HAP-1 (cell line): ENCODE measurements at regions of chr5 and their contacts with region 1.

Region 1: DNA sequence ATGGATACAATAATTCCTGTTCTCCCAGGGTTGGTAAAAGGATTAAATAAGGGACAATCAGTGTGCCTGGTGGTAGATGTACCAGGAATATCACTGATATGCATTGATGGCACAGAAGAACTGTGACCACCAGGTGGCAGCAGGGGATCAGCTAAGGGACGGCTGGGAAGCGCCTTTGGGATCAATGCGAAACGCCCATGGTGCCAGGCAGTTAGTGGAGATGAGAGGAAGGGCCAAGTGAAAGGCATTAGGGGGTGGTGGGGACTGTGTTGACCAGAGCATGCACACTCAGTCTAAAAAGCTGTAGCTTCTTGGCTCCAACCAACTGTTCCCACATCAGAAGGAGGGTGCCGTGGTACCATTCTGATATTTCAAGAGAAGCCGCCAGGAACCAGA is 55.6 kb downstream of the ARHGEF37 start:
- DNase-seq: peak; percentile 63 to 95
- H3K4me3 ChIP-seq: no peak overlapping the region
- H3K4me1 ChIP-seq: no peaks in the 10 kb centered on the region
- H3K27me3 ChIP-seq: no peaks in the 10 kb centered on the region

Region 2: DNA sequence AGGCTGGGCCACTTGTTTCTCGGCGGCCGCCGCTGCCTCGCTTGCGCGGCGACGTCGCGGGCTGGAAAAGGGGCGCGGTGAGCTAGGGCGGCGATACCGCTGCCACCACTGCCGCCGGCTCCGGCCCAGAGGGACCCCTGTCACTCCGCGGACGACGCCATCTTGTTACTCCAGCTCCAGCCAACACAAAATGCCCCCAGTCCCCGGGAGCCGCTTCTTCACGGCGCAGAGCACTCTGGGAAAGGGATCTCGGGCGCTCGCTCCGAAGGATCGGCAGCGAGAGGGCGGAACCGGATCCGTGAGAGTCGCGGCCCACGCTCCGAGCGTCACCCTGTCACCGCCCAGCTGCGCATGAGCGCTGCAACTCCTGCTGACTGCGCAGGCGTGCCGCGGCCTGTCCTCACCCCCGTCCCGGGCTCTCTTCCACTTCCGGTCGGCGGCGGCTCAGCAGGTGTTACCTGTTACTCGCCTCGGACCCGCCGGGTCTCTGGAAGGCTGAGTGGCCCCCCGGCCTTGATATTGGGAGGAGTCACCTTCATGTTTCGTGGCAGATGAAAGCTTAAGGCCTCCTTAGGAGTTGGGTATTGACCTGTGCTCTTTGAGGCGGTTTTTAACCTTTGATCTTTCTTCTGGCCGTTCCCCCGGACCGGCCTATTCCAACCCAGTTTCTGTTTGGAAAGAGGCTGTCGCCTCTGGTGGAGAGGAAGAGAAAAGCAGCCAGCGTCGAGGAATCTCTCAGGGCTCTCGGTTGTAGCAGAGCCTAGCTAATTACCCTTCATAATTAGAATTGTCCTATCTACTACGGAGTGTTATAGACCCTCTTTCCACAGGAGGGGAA is 85.4 kb before region 1 on chr5 and contains the start of gene CSNK1A1:
- in situ Hi-C with region 1: no loop called
- DNase-seq: peak; percentile 97 to 99
- H3K4me3 ChIP-seq: peak within 1 kb of the TSS; percentile 89
- H3K4me1 ChIP-seq: peaks cover 26% of the 10 kb centered on the region
- H3K27me3 ChIP-seq: no peaks in the 10 kb centered on the region

Region 3: GRCh38 chr5:149828161-149828884 is 191.5 kb after region 1 on chr5:
- in situ Hi-C with region 1: loop called (anchors 5 kb)
- DNase-seq: peak; percentile 80 to 91
- H3K4me3 ChIP-seq: no peak overlapping the region
- H3K4me1 ChIP-seq: no peaks in the 10 kb centered on the region
- H3K27me3 ChIP-seq: no peaks in the 10 kb centered on the region

Region 4: GRCh38 chr5:149988126-149988525 is 351.3 kb after region 1 on chr5:
- in situ Hi-C with region 1: loop called (anchors 5 kb)
- DNase-seq: no peak
- H3K4me3 ChIP-seq: no peak overlapping the region
- H3K4me1 ChIP-seq: peaks cover 3% of the 10 kb centered on the region
- H3K27me3 ChIP-seq: no peaks in the 10 kb centered on the region

Region 5: GRCh38 chr5:150217873-150218692 is 581.2 kb after region 1 on chr5:
- in situ Hi-C with region 1: loop called (anchors 25 kb)
- DNase-seq: peak; percentile 56 to 88
- H3K4me3 ChIP-seq: no peak overlapping the region
- H3K4me1 ChIP-seq: no peaks in the 10 kb centered on the region
- H3K27me3 ChIP-seq: no peaks in the 10 kb centered on the region